Colonic mucosa (tissue), 4 donors: ENCODE measurements at regions of chr7 and their contacts with region 1.

Region 1: GRCh38 chr7:141737834-141738591 is at the start of gene SSBP1:
- DNase-seq: peak; percentile 93
- H3K4me3 ChIP-seq: peak within 1 kb of the TSS; percentile 68
- H3K27ac ChIP-seq: peak within 1 kb of the TSS; percentile 83
- H3K4me1 ChIP-seq: no peaks in the 10 kb centered on the region
- H3K27me3 ChIP-seq: no peaks in the 10 kb centered on the region
- CTCF ChIP-seq: peak; percentile 59
- total RNA-seq, gene SSBP1: 76.7 to 130 TPM

Region 2: DNA sequence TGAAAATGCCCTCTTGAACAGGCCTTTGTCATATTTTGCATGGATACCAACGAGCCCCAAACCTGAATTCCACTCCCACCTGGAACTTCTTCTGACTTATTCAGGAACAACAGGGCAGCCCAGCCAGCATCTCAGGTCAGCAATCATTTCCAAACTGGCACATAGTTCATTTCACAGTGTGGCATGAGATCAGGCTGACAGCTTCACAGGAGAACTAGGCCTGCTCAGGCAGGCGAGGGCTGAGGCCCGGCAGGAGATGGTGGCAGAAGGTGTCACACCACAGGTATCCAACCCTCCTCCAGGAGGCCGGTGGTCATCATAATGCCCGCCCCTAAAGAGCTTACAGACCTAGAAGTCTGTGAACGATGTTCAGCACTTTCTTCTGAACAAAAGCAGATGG is 78.5 kb before region 1 on chr7:
- intact Hi-C with region 1: loop called (anchors 5 kb)
- DNase-seq: no peak
- H3K4me3 ChIP-seq: no peak overlapping the region
- H3K27ac ChIP-seq: no peak overlapping the region
- H3K4me1 ChIP-seq: peaks cover 8% of the 10 kb centered on the region
- H3K27me3 ChIP-seq: no peaks in the 10 kb centered on the region
- CTCF ChIP-seq: no peak